Endothelial cell of umbilical vein (primary cell): ENCODE measurements at regions of chr9 and their contacts with region 1.

Region 1: GRCh38 chr9:19184144-19184917 is 46.2 kb upstream of the DENND4C start:
- DNase-seq: peak; percentile 92
- H3K4me3 ChIP-seq: no peak overlapping the region
- H3K27ac ChIP-seq: peak overlapping the region; percentile 96
- H3K4me1 ChIP-seq: peaks cover 32% of the 10 kb centered on the region
- H3K27me3 ChIP-seq: no peaks in the 10 kb centered on the region
- CTCF ChIP-seq: no peak
- POLR2A ChIP-seq: no peak

Region 2: DNA sequence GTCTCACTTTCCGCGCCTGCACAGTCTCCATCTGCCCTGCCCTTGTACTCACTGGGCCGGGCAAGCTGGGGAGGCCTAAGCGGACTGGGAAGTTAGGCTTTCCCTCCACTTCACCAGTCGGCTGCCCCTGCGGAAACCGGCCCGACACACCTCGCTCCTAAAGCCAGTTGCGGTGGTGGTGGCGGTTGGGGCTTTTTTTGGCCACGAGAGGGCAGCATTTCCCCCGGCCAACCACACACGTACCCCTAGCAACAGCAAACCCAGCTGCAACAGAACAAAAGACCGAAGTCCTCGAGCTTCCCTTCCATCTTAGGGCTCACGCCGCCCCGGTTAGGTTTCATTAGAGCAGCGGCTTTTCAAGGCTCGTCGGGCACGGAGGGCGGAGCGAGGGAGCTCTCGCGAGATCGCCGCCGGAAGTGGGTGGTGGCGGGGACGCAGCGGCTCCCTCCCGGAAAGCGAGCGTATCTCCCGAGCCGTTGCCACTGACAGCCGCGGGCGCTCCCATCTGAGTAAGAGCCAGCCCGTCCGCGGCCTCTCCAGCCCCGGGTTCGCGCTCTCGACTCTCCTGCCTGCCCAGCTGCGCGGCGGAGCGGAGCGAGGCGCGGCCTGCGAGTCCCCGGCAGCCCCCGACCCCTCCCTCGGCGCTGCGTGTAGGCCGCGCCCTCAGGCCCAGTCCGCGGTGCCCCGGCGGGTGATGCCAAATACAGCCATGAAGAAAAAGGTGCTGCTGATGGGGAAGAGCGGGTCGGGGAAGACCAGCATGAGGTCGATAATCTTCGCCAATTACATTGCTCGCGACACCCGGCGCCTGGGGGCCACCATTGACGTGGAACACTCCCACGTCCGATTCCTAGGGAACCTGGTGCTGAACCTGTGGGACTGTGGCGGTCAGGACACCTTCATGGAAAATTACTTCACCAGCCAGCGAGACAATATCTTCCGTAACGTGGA is 135.1 kb before region 1 on chr9 and contains the start of gene RRAGA:
- CTCF ChIA-PET with region 1: interaction called, 5 read pairs
- POLR2A ChIA-PET with region 1: no interaction called
- dilution Hi-C with region 1: no loop called
- intact Hi-C with region 1: loop called (anchors 2 kb)
- DNase-seq: peak; percentile 97
- H3K4me3 ChIP-seq: peak within 1 kb of the TSS; percentile 48 to 76 (median 53)
- H3K27ac ChIP-seq: peak within 1 kb of the TSS; percentile 69
- H3K4me1 ChIP-seq: peaks cover 16% of the 10 kb centered on the region
- H3K27me3 ChIP-seq: no peaks in the 10 kb centered on the region
- CTCF ChIP-seq: peak; percentile 81 to 91
- POLR2A ChIP-seq: peak; percentile 97
- total RNA-seq, gene RRAGA: 78.5 and 81.2 TPM in 2 replicates

Region 3: GRCh38 chr9:19213823-19214222 is 29.5 kb after region 1 on chr9:
- CTCF ChIA-PET with region 1: interaction called, 3 read pairs
- POLR2A ChIA-PET with region 1: no interaction called
- dilution Hi-C with region 1: no loop called
- intact Hi-C with region 1: loop called (anchors 1 kb)
- DNase-seq: no peak
- H3K4me3 ChIP-seq: no peak overlapping the region
- H3K27ac ChIP-seq: no peak overlapping the region
- H3K4me1 ChIP-seq: no peaks in the 10 kb centered on the region
- H3K27me3 ChIP-seq: no peaks in the 10 kb centered on the region
- CTCF ChIP-seq: no peak
- POLR2A ChIP-seq: no peak

Region 4: DNA sequence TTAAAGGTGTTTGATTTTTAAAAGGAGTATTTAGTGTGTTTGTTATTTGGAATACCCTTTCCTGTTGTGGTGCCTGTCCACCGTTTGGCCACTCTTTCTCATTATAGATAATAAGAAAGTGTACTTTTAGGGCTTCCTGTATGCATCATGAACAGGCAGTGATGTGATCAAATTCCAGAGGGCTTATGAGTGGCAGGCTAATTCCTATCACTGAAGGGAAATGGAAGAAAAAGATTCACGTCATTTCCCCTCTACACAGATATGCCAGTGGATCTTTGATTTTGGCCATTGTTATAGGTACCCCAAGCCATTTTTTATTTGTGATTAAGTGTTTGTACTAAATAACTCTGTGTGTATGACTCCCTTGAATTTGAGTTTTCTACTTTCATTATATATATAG is 158.6 kb after region 1 on chr9:
- CTCF ChIA-PET with region 1: no interaction called
- POLR2A ChIA-PET with region 1: no interaction called
- dilution Hi-C with region 1: no loop called
- intact Hi-C with region 1: loop called (anchors 5 kb)
- DNase-seq: peak; percentile 69
- H3K4me3 ChIP-seq: no peak overlapping the region
- H3K27ac ChIP-seq: peak overlapping the region; percentile 79
- H3K4me1 ChIP-seq: peaks cover 13% of the 10 kb centered on the region
- H3K27me3 ChIP-seq: no peaks in the 10 kb centered on the region
- CTCF ChIP-seq: no peak
- POLR2A ChIP-seq: no peak

Region 5: GRCh38 chr9:19456996-19457692 is 272.8 kb after region 1 on chr9:
- CTCF ChIA-PET with region 1: interaction called, 7 read pairs
- POLR2A ChIA-PET with region 1: no interaction called
- dilution Hi-C with region 1: no loop called
- intact Hi-C with region 1: loop called (anchors 1 kb)
- DNase-seq: peak; percentile 80
- H3K4me3 ChIP-seq: no peak overlapping the region
- H3K27ac ChIP-seq: no peak overlapping the region
- H3K4me1 ChIP-seq: peaks cover 6% of the 10 kb centered on the region
- H3K27me3 ChIP-seq: no peaks in the 10 kb centered on the region
- CTCF ChIP-seq: peak; percentile 88 to 93
- POLR2A ChIP-seq: no peak